Endothelial cell of umbilical vein (primary cell): ENCODE measurements at regions of chr13 and their contacts with region 1.

Region 1: DNA sequence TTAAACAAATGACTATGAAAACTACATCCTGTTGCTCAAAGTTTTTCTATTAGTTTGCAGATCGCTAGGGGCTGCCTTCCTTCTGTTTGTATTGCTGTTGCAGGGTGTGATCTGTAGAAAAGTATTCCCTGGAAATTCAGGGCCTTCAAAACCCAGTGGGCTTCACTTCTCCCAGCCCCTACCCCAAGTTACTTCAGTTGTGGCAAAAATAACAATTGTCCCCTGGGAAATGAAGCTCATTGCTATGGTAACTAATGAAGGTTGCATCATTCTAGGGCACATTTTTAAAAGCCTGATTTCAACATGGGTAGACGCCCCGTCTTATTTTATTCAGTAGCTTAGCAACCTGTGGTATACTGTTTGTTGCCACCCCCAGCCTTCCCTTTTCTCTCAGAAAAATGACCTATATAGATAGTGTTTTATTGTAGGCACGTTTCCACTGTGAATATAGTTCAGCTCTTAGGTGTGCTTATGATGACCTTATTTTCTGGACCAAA is 60.9 kb downstream of the WDFY2 start:
- DNase-seq: no peak
- H3K4me3 ChIP-seq: no peak overlapping the region
- H3K27ac ChIP-seq: peak overlapping the region; percentile 87
- H3K4me1 ChIP-seq: peaks cover 28% of the 10 kb centered on the region
- H3K27me3 ChIP-seq: no peaks in the 10 kb centered on the region
- CTCF ChIP-seq: no peak
- POLR2A ChIP-seq: no peak

Region 2: DNA sequence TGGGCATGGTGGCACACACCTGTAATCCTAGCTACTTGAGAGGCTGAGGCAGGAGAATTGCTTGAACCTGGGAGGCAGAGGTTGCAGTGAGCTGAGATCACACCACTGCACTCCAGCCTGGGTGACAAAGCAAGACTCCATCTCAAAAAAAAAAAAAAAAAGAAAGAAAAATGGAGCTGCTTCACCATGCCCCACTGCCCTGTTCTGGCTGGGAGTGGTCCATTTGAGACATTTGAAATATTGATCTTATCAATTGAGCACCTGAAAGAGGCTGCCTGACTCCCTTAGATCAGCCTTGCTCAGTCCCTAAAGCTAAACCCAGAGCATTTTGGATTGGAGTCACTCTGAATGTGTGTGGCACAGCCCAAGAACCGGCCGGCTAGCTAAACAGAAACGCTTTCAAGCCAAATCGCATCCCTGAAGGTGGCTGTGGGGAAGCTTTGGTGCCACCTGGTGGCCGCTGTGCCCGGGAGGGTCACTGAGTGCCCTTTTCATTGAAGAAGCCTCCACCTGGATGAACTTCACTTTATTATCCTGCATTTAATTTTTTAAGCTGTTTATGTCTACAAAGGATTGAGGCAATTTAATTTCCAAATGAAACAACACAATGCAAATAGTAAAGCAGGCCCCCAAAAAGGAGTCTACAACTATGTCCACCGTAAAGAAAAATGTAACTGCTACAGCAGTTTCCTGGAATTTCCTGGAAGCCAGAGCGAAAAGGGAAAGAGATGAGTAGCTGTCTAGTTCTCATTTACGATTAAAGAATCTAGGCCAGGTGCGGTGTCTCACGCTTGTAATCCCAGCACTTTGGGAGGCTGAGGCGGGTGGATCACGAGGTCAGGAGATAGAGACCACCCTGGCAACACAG is 358.8 kb before region 1 on chr13:
- CTCF ChIA-PET with region 1: no interaction called
- POLR2A ChIA-PET with region 1: no interaction called
- dilution Hi-C with region 1: no loop called
- intact Hi-C with region 1: no loop called
- DNase-seq: peak; percentile 73
- H3K4me3 ChIP-seq: no peak overlapping the region
- H3K27ac ChIP-seq: no peak overlapping the region
- H3K4me1 ChIP-seq: no peaks in the 10 kb centered on the region
- H3K27me3 ChIP-seq: peaks cover 0 to 3% of the 10 kb centered on the region in 2 experiments
- CTCF ChIP-seq: peak; percentile 87 to 92
- POLR2A ChIP-seq: no peak

Region 3: GRCh38 chr13:51361106-51361505 is 284.1 kb before region 1 on chr13:
- CTCF ChIA-PET with region 1: no interaction called
- POLR2A ChIA-PET with region 1: no interaction called
- dilution Hi-C with region 1: no loop called
- intact Hi-C with region 1: no loop called
- DNase-seq: no peak
- H3K4me3 ChIP-seq: no peak overlapping the region
- H3K27ac ChIP-seq: no peak overlapping the region
- H3K4me1 ChIP-seq: peaks cover 12% of the 10 kb centered on the region
- H3K27me3 ChIP-seq: no peaks in the 10 kb centered on the region
- CTCF ChIP-seq: no peak
- POLR2A ChIP-seq: no peak

Region 4: DNA sequence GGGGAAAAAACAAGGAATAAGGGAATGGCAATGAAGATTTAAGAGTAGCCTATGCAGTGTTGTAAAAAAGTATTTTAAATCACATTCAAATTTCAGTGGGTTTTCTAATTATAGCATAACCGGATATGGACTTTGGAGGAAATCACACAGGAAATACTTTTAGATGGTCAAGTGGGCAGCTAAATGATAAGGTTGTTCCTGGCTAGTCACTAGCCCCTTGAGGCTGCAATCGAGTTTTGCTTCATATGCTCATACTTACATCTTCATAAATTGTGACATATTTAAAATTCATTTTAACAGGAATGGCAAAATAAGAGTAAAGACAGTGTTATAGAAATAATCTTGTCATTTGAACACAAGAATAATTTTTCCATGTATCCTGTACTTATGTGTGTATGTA is 28.0 kb after region 1 on chr13:
- CTCF ChIA-PET with region 1: interaction called, 3 read pairs
- POLR2A ChIA-PET with region 1: no interaction called
- dilution Hi-C with region 1: no loop called
- intact Hi-C with region 1: loop called (anchors 2 kb)
- DNase-seq: peak; percentile 11
- H3K4me3 ChIP-seq: no peak overlapping the region
- H3K27ac ChIP-seq: no peak overlapping the region
- H3K4me1 ChIP-seq: peaks cover 9% of the 10 kb centered on the region
- H3K27me3 ChIP-seq: no peaks in the 10 kb centered on the region
- CTCF ChIP-seq: no peak
- POLR2A ChIP-seq: no peak